ENCODE measurements at regions of chr5 and their contacts with region 1.

Region 1: DNA sequence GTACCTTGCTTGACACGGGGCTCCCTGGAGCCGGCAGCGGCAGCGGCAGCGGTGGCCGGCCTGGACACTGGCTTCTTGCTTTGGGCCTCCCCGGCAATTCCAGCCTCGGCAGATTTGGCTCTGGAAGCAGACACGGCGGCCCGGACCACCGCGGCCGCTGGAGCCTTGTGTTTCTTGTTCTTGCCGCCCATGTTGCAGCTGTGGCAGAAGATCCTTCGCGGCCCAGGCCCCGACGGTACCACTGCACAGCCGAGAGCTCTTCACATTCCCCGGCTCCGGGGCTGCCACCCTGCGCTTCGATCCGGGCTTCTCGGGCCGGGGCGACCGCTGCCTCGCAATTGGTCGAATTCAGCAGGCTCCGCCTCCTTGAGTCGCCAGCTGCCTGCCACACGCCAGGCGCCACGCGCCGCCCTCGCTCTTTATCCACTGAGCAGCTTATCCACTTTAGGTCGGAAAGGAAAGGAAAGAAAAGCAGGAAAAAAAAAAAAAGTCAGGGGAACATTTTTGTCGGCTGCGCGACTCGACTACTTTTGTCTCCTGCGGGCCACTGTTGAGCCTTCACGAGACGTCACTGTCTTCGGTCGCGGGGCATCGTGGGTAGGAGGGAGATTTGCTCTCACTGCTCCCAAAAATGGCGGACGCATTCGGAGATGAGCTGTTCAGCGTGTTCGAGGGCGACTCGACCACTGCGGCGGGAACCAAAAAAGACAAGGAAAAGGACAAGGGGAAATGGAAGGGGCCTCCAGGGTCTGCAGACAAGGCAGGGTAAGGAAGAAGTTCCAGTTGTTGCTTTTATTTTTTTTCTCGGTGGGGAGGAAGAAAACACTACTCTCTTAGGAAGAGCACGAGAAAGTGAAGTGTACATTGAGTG is at the starts of genes DHX29 and MTREX:
- DNase-seq: peak; percentile 82
- ATAC-seq: peak; percentile 92
- H3K4me3 Mint-ChIP-seq: no peak within 1 kb of the TSS
- H3K27ac Mint-ChIP-seq: no peak within 1 kb of the TSS
- H3K4me1 Mint-ChIP-seq: peaks cover 31% of the 10 kb centered on the region
- H3K27me3 Mint-ChIP-seq: no peaks in the 10 kb centered on the region
- CTCF ChIP-seq: no peak
- total RNA-seq, gene DHX29: 17.4 TPM in 2 replicates
- total RNA-seq, gene MTREX: 98.8 and 106 TPM in 2 replicates

Region 2: DNA sequence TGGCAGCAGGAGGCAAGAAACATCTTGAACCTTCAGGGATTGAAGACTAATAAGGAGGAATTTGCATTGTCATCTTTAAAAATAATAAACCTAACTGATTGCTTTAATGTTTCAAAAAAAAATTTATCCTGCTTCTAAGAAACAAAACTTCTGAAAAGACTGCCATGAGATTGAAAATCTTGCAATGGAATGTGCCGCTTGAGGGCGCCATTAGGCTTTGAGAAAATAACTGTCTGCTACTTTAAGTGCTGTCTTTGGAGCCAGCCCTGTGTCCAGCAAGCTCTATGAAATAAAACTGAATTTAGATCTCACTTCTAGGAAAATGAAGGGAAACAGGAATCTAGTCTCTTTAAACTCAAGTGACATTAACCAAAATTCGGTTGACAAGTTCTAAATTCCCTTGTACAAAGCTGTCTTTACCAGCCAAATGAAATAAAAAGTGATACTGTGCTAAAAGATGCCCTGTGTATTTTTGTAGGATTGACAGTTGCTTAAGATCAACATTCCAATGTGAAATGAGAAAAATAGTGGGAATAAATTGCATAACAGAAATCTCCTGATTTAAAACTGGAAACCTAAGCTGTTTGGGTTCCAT is 401.6 kb before region 1 on chr5:
- CTCF ChIA-PET with region 1: no interaction called
- POLR2A ChIA-PET with region 1: no interaction called
- intact Hi-C with region 1: loop called (anchors 10 kb)
- DNase-seq: no peak
- ATAC-seq: no peak
- H3K4me3 Mint-ChIP-seq: no peak overlapping the region
- H3K27ac Mint-ChIP-seq: no peak overlapping the region
- H3K4me1 Mint-ChIP-seq: peaks cover 11% of the 10 kb centered on the region
- H3K27me3 Mint-ChIP-seq: peaks cover 48% of the 10 kb centered on the region
- CTCF ChIP-seq: no peak

Region 3: GRCh38 chr5:55232985-55233928 is 74.4 kb before region 1 on chr5 and contains the start of gene CCNO:
- CTCF ChIA-PET with region 1: no interaction called
- POLR2A ChIA-PET with region 1: interaction called, 10 read pairs
- intact Hi-C with region 1: loop called (anchors 2 kb)
- DNase-seq: peak; percentile 45
- ATAC-seq: peak; percentile 77
- H3K4me3 Mint-ChIP-seq: peak within 1 kb of the TSS; percentile 81
- H3K27ac Mint-ChIP-seq: no peak within 1 kb of the TSS
- H3K4me1 Mint-ChIP-seq: peaks cover 29% of the 10 kb centered on the region
- H3K27me3 Mint-ChIP-seq: peaks cover 66% of the 10 kb centered on the region
- CTCF ChIP-seq: no peak
- total RNA-seq, gene CCNO: not detected in 2 replicates

Region 4: DNA sequence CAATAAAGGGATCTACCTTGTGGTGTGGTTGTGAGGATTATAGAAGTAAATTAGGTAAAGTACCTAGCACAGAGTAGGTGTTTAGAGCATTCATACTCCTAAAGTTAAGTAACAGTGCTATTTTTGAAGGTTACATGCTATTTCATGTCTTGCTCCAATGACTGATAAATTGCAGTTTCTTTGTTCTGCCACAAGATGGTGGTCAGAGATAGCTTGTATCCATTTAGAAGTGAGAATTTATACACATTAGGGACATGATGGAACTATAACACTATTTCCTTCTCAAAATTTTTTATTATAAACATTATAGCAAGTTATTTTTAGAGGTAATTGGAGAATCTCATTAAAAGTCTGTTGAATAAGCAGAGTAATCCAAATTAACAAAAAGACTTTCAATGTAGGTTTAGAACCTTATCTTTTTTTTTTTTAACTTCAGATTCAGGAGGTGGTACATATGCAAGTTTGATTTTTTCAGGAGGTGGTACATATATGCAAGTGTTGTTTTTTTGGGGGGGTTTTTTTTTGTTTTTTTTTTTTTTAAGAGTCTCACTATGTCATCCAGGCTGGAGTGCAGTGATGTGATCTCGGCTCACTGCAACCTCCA is 17.3 kb after region 1 on chr5:
- CTCF ChIA-PET with region 1: no interaction called
- POLR2A ChIA-PET with region 1: interaction called, 15 read pairs
- intact Hi-C with region 1: loop called (anchors 1 kb)
- DNase-seq: no peak
- ATAC-seq: peak; percentile 56
- H3K4me3 Mint-ChIP-seq: no peak overlapping the region
- H3K27ac Mint-ChIP-seq: no peak overlapping the region
- H3K4me1 Mint-ChIP-seq: peaks cover 6% of the 10 kb centered on the region
- H3K27me3 Mint-ChIP-seq: no peaks in the 10 kb centered on the region
- CTCF ChIP-seq: no peak

Measured in activated B cell treated with CpG ODN at 0.5 μM for 24 hours (primary cell).